Right ventricle myocardium inferior (tissue), 1 donor: ENCODE measurements at regions of chr6 and their contacts with region 1.

Region 1: GRCh38 chr6:97394160-97394748 is 111.2 kb upstream of the MMS22L start:
- DNase-seq: no peak
- ATAC-seq: no peak

Region 2: GRCh38 chr6:97021194-97021593 is 373.1 kb before region 1 on chr6:
- intact Hi-C with region 1: no loop called
- DNase-seq: no peak
- ATAC-seq: no peak

Region 3: GRCh38 chr6:97073903-97074302 is 320.4 kb before region 1 on chr6:
- intact Hi-C with region 1: loop called (anchors 5 kb)
- DNase-seq: no peak
- ATAC-seq: no peak

Region 4: DNA sequence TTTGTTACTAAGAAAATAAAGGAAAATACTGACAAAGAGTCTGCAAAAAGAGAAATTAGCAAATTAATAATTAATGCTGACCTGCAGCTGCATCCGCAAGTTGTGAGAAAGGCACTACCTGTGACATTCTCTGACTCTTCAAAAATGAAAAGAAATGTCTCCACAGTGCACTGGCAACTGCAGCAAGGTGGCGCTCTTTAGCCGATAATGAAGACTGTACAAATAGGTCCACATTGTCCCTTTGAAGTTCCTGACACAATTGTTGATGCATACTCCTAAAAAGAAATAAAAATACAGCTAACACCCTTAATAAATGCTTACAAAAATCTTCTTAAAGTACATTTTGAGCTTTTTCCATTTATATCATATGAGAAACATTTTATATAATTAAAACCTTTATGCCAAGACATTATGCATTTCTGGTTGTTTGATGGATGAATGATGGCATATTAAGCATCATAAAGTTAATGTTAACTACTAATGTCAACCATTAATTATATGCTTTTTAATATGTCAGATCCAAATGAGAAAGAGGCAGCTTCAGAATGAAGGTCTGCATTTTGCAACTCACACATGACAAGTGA is 207.7 kb before region 1 on chr6:
- intact Hi-C with region 1: loop called (anchors 1 kb)
- DNase-seq: no peak
- ATAC-seq: no peak

Region 5: GRCh38 chr6:97437087-97437486 is 42.8 kb after region 1 on chr6:
- intact Hi-C with region 1: no loop called
- DNase-seq: no peak
- ATAC-seq: no peak

Region 6: GRCh38 chr6:97865612-97866011 is 471.4 kb after region 1 on chr6:
- intact Hi-C with region 1: no loop called
- DNase-seq: no peak
- ATAC-seq: no peak